Thyroid gland (tissue), 4 donors: ENCODE measurements at regions of chr22 and their contacts with region 1.

Region 1: DNA sequence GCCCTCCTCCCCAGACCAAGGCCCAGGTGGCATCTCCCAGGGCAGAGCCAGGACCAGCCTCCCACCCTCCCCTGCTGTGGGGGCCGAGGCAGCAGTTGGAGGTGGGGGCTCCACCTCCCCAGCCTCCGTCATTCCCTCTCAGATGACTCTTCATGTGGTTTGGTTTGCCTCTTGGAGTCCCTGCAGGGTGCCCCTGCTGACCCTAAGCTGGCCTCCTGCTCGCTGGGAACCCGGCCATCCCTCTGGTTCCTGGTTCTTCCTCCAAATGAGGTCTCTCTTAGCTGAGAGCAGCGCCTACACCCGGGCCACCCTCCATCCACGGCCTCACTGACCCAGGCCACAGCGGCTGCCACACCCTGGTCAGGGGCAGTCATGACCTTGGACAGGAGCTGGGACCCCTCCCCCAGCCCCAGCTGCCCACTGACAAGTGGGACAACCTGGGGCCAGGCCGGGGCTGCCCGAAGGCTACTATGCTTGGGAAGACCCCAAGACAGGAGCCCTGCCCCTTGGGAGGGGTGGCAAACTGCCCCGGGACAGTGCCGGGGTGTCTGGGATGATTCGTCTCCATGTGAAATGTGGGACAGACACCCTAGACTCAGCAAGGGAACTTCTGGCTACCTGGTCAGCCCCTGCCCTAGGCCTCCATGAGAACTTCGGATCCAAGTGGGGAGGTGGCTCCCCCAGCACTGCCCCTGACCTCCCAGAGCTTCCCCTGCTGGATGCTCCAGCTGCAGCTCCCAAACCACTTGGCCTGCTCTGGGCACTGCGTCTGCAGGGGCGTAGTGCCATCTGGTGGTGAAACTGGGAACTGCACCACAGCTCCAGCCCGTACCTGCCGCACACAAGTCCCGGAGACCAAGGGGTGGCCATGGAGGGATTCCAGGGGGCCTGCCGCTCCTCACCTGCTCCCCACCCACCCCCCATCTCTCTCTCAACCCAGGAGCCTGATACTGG is 194.5 kb downstream of the IGLL1 start:
- DNase-seq: peak; percentile 78 to 82
- H3K4me3 ChIP-seq: no peak overlapping the region
- H3K27ac ChIP-seq: no peak overlapping the region
- H3K4me1 ChIP-seq: peaks cover 7 to 17% of the 10 kb centered on the region in 2 donors
- H3K27me3 ChIP-seq: no peaks in the 10 kb centered on the region
- CTCF ChIP-seq: peak; percentile 89 to 99 (median 99)
- POLR2A ChIP-seq: no peak

Region 2: DNA sequence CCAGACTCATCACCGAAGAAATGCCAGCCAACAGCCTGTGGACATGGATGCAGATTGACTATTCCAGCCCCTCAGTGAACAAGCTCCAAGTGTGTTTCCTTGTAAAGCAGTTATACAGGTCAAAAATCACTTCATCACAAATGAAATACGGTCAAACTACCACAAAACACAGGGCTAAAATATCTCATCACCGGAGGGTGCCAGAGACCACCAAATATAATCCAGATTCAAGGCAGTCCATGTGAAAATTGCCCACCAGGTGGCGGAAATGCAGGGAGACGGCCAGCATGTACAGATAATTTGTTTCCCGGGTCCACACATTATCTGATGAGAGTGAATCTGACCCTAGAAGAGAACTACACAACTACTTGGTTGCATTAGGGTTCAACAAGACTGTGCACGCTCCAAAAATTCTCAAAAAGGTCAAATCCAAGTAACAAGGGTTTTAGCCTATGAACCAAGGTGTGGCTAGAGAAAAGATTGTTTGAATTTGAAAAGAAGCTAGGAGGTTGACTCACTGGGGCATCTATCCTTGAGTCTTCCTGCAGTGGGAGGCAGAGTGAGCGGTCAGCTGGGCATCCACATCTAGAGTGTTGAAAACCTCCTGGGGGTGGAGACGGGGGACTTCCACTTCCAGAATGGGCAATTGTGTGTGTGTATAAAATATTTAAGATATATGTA is 426.3 kb before region 1 on chr22:
- intact Hi-C with region 1: loop called (anchors 5 kb)
- DNase-seq: peak; percentile 80 to 83
- H3K4me3 ChIP-seq: no peak overlapping the region
- H3K27ac ChIP-seq: no peak overlapping the region
- H3K4me1 ChIP-seq: no peaks in the 10 kb centered on the region
- H3K27me3 ChIP-seq: no peaks in the 10 kb centered on the region
- CTCF ChIP-seq: peak; percentile 65 to 99 (median 90)
- POLR2A ChIP-seq: no peak

Region 3: DNA sequence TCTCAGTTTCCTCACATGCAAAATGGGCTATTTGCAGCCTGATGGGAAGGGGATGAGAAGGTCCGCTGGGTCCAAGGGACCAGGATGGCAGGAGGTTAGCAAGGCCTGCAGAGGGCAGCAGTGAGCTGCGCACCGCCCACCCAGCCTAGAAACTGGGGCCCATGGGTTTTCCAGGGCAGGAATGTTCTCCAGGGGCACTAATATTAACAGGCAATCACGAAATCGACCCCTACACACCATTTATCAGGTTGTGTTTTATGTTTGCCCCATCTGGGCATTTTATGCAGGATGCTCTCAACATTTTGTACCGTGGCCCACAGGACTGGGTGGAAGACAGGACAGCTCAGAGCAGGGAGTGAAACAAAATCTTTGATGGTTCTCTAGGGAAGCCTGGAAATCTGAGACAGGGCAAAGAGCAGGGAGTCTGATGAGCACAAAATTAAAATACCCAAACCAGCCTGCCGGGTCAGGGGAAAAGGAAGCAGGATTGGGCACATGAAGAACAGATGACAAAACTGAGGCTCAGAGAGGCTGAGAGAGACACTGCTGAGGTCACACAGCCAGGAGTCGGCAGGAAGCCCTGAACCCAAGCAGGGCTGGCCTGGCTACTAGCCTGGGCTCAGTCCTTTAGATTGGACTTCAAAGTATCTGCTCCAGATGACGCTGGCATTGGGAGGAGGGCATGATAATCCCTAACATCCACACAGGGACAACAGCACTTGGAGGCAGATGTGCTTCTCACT is 206.9 kb before region 1 on chr22:
- intact Hi-C with region 1: loop called (anchors 2 kb)
- DNase-seq: peak; percentile 67 to 72
- H3K4me3 ChIP-seq: no peak overlapping the region
- H3K27ac ChIP-seq: peak overlapping the region in 1 of 3 donors; percentile 61
- H3K4me1 ChIP-seq: peaks cover 35 to 36% of the 10 kb centered on the region in 2 donors
- H3K27me3 ChIP-seq: no peaks in the 10 kb centered on the region
- CTCF ChIP-seq: peak; percentile 89 to 97 (median 94)
- POLR2A ChIP-seq: no peak

Region 4: DNA sequence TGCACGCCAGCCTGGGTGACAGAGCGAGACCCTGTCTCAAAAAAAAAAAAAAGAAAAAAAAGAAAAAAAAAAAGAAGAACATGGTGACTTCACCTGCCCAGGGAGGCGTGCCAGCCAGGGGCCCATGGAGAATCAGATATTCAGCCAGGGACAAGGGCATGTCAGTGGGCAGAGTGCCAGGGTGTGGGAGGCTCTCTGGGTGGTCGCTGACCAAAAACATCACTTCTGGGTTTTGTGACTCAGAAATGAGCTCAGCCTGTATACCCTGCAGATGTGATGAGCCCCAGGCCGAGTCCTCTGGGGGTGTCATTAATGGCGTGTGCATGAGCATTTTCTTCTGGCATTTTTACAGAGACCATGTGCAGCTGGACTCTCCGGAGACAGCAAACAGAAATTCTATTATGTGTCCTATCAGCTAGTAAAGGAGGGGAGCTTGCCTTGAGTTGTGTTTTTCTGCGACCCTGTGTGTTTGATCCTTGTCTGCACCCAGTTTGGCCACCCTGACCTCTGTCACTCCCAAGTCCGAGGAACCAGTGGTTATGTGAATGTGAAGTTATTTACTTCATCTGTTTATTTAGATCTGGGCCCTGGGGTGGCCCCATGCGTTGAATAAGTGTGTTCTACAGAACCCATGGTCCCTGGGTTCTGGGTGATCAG is 151.7 kb before region 1 on chr22:
- intact Hi-C with region 1: no loop called
- DNase-seq: peak; percentile 71 to 73
- H3K4me3 ChIP-seq: no peak overlapping the region
- H3K27ac ChIP-seq: peak overlapping the region in 2 of 3 donors; percentile 26 to 30
- H3K4me1 ChIP-seq: peaks cover 37 to 84% of the 10 kb centered on the region in 2 donors
- H3K27me3 ChIP-seq: no peaks in the 10 kb centered on the region
- CTCF ChIP-seq: no peak
- POLR2A ChIP-seq: no peak

Region 5: GRCh38 chr22:23313791-23314190 is 71.8 kb before region 1 on chr22:
- intact Hi-C with region 1: loop called (anchors 5 kb)
- DNase-seq: no peak
- H3K4me3 ChIP-seq: no peak overlapping the region
- H3K27ac ChIP-seq: no peak overlapping the region
- H3K4me1 ChIP-seq: no peaks in the 10 kb centered on the region
- H3K27me3 ChIP-seq: no peaks in the 10 kb centered on the region
- CTCF ChIP-seq: no peak
- POLR2A ChIP-seq: no peak

Region 6: DNA sequence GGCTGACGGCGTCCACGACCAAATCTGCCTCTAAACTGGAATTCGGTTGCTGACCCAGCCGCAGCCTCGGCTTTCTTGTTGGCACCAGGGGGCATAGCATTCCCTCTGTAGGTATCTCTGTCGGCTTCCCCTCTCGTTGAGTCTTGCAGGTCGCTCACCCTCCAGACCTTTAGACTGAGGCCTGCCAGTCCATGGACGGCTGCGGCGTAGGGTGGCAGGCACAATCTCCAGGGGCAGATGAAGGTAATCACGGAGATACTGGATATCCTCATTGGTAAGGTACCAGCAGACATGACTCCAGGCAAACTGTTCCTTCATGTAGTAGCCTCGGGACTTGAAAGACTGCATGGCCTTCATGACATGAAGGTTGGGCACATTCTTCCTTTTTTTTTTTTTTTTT is 63.0 kb before region 1 on chr22:
- intact Hi-C with region 1: loop called (anchors 5 kb)
- DNase-seq: no peak
- H3K4me3 ChIP-seq: no peak overlapping the region
- H3K27ac ChIP-seq: no peak overlapping the region
- H3K4me1 ChIP-seq: no peaks in the 10 kb centered on the region
- H3K27me3 ChIP-seq: no peaks in the 10 kb centered on the region
- CTCF ChIP-seq: no peak
- POLR2A ChIP-seq: no peak